ENCODE measurements at regions of chr1 and their contacts with region 1.

Region 1: GRCh38 chr1:41573785-41574713 is 89.6 kb upstream of the EDN2 start:
- DNase-seq: peak; percentile 54
- ATAC-seq: peak; percentile 97
- H3K4me3 ChIP-seq: no peak overlapping the region
- H3K27ac ChIP-seq: no peak overlapping the region
- H3K4me1 ChIP-seq: peaks cover 0 to 4% of the 10 kb centered on the region in 2 experiments; a peak in 1 of 4 replicates
- H3K27me3 ChIP-seq: no peaks in the 10 kb centered on the region
- CTCF ChIP-seq: peak; percentile 90 to 96 (median 94)
- POLR2A ChIP-seq: no peak
- RAD21 ChIP-seq: peak; percentile 99

Region 2: GRCh38 chr1:41268154-41268770 is 305.8 kb before region 1 on chr1:
- CTCF ChIA-PET with region 1: no interaction called
- POLR2A ChIA-PET with region 1: no interaction called
- RAD21 ChIA-PET with region 1: no interaction called
- intact Hi-C with region 1: loop called (anchors 5 kb)
- DNase-seq: peak; percentile 50
- ATAC-seq: peak; percentile 96
- H3K4me3 ChIP-seq: no peak overlapping the region
- H3K27ac ChIP-seq: no peak overlapping the region
- H3K4me1 ChIP-seq: peaks cover 0 to 2% of the 10 kb centered on the region in 2 experiments; a peak in 1 of 4 replicates
- H3K27me3 ChIP-seq: no peaks in the 10 kb centered on the region
- CTCF ChIP-seq: peak; percentile 89 to 96 (median 93)
- POLR2A ChIP-seq: no peak
- RAD21 ChIP-seq: peak; percentile 96

Region 3: DNA sequence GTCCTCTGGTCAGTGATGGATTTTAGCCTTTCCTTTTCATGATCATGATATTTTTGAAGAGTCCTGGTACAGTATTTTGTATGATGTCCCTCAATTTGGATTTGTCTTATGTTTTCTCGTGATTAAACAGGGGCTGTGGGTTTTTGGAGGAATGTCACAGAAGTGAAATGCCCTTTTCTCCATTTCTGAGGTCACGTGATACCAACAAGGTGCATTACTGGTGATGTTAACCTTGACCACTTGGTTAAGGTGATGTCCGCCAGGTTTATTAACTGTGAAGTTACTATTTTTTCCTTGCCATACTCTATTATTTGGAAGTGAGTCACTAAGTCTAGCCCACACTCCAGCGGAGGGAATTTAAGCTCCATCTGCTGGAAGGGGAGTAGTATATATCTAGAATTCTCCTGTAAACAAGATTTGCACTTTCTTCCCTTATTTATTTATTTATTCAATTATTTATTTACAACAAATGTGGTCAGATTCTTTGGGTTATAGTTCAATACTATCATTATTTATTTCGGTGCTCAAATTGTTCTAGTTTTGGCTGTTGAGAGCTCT is 221.2 kb after region 1 on chr1:
- CTCF ChIA-PET with region 1: interaction called, 7 read pairs
- POLR2A ChIA-PET with region 1: no interaction called
- RAD21 ChIA-PET with region 1: no interaction called
- intact Hi-C with region 1: loop called (anchors 1 kb)
- DNase-seq: peak; percentile 38
- ATAC-seq: peak; percentile 86
- H3K4me3 ChIP-seq: no peak overlapping the region
- H3K27ac ChIP-seq: no peak overlapping the region
- H3K4me1 ChIP-seq: peaks cover 0 to 8% of the 10 kb centered on the region in 2 experiments; a peak in 2 of 4 replicates
- H3K27me3 ChIP-seq: no peaks in the 10 kb centered on the region
- CTCF ChIP-seq: peak; percentile 30 to 87 (median 47)
- POLR2A ChIP-seq: no peak
- RAD21 ChIP-seq: peak; percentile 84

Region 4: DNA sequence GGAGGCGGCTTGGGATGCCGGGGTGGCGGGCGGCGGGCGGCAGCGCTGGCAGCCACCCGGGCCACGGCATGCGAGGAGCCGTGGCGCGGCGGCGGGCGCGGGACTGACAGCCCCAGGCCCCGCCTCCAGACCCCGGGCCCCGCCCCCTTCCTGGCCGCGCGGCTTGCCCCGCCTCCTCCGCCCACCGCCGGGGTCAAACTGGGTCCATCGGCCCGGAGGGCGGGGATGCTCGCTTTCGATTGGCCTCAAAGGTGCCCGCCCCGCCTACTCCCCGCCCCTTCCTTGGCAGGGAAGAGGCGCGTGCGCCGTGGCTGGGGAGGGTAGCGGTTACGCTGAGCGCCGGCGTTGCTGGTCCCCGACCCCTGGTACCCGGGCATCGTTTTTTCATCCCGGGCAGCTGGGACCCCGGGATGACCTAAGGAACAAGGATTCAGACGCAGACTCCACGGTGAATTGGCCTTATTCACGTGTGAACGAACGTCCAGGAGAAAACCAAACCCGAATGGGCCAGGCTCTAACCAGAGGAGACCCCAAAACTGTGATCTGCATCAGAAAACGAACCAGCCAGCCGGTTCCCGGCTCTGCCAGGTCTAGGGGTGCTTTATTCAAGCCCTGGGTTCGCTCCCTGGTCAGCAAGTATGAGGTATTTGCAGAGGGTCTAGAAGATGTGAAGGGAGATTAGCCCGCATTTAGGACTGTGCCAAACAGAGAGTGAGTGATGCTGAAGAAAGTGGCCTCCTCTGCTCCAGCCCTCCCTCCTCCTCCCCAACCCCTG is 462.0 kb after region 1 on chr1:
- CTCF ChIA-PET with region 1: no interaction called
- POLR2A ChIA-PET with region 1: no interaction called
- RAD21 ChIA-PET with region 1: no interaction called
- intact Hi-C with region 1: loop called (anchors 10 kb)
- DNase-seq: peak; percentile 82
- ATAC-seq: peak; percentile 90
- H3K4me3 ChIP-seq: peak overlapping the region; percentile 62 to 81
- H3K27ac ChIP-seq: peak overlapping the region; percentile 63; the same call in 1 of the 2 replicates
- H3K4me1 ChIP-seq: peaks cover 10 to 20% of the 10 kb centered on the region in 2 experiments; a peak in 3 of 4 replicates
- H3K27me3 ChIP-seq: no peaks in the 10 kb centered on the region
- CTCF ChIP-seq: no peak
- POLR2A ChIP-seq: peak; percentile 47
- RAD21 ChIP-seq: no peak

Region 5: DNA sequence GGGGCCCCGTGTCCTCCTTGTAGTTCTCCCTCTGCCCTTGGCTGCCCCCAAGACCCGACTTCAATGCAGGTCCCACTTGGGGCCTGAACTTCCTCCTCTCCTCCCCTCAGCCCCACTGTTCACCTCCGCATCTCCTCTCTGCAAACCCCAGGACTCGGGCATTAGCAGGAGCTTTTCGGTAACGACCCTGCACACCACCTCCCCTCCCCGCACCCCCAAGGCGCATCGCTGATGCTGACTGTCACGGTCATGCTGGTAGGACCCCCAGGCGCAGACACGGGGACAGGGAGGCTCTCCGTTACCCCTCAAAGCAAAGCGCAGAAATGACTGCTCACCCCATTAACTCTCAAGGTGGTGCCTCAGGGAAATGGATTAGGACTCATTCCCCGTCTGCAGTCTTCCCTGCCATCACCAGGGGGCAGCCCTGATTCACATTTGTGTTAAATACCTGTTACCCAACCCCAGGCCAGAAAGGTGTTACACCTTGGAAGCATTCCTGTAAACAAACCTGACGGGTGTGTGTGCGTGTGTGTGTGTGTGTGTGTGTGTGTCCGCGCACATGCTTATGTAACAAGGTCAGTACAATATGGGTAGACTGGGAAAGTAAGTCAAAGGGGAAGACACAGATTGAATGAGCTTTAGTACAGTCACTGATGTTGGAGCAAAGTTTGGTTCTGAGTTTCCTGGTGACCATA is 572.7 kb after region 1 on chr1:
- CTCF ChIA-PET with region 1: no interaction called
- POLR2A ChIA-PET with region 1: no interaction called
- RAD21 ChIA-PET with region 1: no interaction called
- intact Hi-C with region 1: loop called (anchors 10 kb)
- DNase-seq: peak; percentile 79
- ATAC-seq: peak; percentile 94
- H3K4me3 ChIP-seq: no peak overlapping the region
- H3K27ac ChIP-seq: no peak overlapping the region
- H3K4me1 ChIP-seq: peaks cover 0 to 8% of the 10 kb centered on the region in 2 experiments; a peak in 1 of 4 replicates
- H3K27me3 ChIP-seq: no peaks in the 10 kb centered on the region
- CTCF ChIP-seq: peak; percentile 83 to 89 (median 83)
- POLR2A ChIP-seq: no peak
- RAD21 ChIP-seq: peak; percentile 95